ENCODE measurements at regions of chr17 and their contacts with region 1.

Region 1: DNA sequence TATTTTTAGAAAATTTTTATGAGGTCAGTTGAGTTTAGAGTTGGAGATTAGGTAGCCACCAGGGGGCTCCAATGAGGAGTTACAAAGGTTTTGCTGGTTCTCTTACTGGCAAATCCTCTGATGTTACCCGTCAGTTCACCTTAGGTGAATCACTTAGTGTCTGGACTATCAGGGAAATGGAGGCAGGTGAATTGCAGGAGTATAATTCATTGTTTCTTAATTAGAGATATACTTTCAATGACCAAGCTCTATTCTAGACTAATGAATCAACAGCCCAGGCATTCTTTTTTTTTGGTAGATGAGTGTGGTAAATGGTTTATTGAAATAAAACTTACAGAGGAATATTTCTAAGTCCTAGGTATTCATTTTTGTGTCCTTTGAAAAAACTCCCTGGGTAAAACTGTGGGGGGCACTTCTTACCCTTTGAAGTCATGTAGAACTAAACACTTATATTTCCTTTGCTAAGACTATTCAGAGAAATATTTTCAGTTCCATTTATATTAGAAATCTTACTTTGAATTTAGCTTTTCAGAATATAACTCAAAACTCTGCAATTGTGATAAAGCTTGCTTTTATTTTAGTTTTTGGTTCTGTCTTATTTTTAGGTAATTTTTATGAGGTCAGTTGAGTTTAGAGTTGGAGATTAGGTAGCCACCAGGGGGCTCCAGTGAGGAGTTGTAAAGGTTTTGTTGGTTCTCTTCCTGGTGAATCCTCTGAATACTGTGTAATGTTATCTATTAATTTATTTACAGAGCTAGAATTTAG is 17.7 kb downstream of the PSMD11 start:
- DNase-seq: peak; percentile 72
- H3K4me3 Mint-ChIP-seq: no peak overlapping the region
- H3K27ac Mint-ChIP-seq: peak overlapping the region; percentile 72
- H3K4me1 Mint-ChIP-seq: peaks cover 32% of the 10 kb centered on the region
- H3K27me3 Mint-ChIP-seq: no peaks in the 10 kb centered on the region

Region 2: GRCh38 chr17:32444308-32445073 is 17.5 kb before region 1 on chr17 and contains the start of gene PSMD11:
- CTCF ChIA-PET with region 1: interaction called, 58 read pairs
- POLR2A ChIA-PET with region 1: interaction called, 3 read pairs
- intact Hi-C with region 1: loop called (anchors 2 kb)
- DNase-seq: peak; percentile 99
- H3K4me3 Mint-ChIP-seq: peak within 1 kb of the TSS; percentile 89
- H3K27ac Mint-ChIP-seq: peak within 1 kb of the TSS; percentile 91
- H3K4me1 Mint-ChIP-seq: peaks cover 49% of the 10 kb centered on the region
- H3K27me3 Mint-ChIP-seq: no peaks in the 10 kb centered on the region
- total RNA-seq, gene PSMD11: 161 to 162 TPM

Region 3: GRCh38 chr17:32486111-32486700 is 24.2 kb after region 1 on chr17:
- CTCF ChIA-PET with region 1: interaction called, 102 read pairs
- POLR2A ChIA-PET with region 1: no interaction called
- intact Hi-C with region 1: loop called (anchors 2 kb)
- DNase-seq: peak; percentile 73
- H3K4me3 Mint-ChIP-seq: peak overlapping the region; percentile 54
- H3K27ac Mint-ChIP-seq: peak overlapping the region; percentile 18
- H3K4me1 Mint-ChIP-seq: peaks cover 46% of the 10 kb centered on the region
- H3K27me3 Mint-ChIP-seq: no peaks in the 10 kb centered on the region

Region 4: DNA sequence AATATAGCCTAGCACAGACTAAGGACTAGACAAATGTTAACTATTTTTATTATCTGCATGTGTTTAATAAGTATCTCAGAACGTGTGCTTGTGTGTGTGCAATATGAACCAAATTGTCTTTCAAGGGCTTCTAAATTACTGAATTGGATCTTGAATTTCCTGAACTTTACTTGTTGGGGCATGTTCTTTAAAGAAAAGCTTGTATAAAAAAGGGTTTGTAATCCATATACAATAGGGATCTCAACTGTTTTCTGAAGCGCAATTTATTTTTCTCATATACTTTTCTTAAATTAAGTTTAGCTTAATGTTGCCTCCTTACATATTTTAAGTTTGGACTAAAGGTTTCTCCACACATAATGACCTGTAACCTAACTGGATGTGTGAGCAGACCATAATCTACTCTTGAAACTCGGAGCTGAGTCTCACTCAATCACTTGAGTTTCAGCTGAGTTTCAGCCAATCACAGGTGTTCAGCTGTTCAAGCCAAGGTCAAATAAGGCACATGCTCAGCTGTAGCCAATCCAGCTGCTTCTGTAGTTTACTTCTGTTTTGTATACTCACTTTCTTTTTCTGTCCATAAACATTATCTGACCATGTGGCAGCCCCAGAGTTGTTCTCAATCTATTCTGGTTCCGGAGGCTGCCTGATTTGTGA is 97.1 kb after region 1 on chr17:
- CTCF ChIA-PET with region 1: interaction called, 10 read pairs
- POLR2A ChIA-PET with region 1: no interaction called
- intact Hi-C with region 1: no loop called
- DNase-seq: no peak
- H3K4me3 Mint-ChIP-seq: no peak overlapping the region
- H3K27ac Mint-ChIP-seq: no peak overlapping the region
- H3K4me1 Mint-ChIP-seq: peaks cover 31% of the 10 kb centered on the region
- H3K27me3 Mint-ChIP-seq: no peaks in the 10 kb centered on the region

Region 5: DNA sequence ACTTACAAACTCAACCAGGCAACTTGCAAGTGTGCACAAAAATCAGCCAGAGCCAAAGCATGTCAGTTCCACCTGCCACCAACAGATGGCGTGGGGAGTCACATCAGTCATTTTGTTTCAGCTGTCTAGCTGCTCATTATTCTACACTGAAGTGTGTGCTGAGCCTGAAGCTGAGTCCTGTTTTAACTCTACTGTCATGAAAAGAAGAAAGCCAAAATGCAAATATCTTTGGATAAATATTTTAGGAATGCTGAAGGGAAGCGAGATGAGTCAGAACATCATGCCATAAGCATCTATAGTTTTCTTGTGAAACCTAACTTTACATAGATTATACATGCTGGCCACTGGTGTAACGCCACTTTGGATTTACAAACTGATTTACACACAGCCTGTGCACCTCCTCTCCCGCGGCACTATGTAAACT is 197.4 kb after region 1 on chr17:
- CTCF ChIA-PET with region 1: interaction called, 20 read pairs
- POLR2A ChIA-PET with region 1: no interaction called
- intact Hi-C with region 1: no loop called
- DNase-seq: peak; percentile 80
- H3K4me3 Mint-ChIP-seq: no peak overlapping the region
- H3K27ac Mint-ChIP-seq: no peak overlapping the region
- H3K4me1 Mint-ChIP-seq: no peaks in the 10 kb centered on the region
- H3K27me3 Mint-ChIP-seq: no peaks in the 10 kb centered on the region